Activated naive CD4-positive, alpha-beta T cell treated with anti-CD3 and anti-CD28 coated beads for 36 hours (primary cell): ENCODE measurements at regions of chr4 and their contacts with region 1.

Region 1: GRCh38 chr4:13654158-13654797 is 26.8 kb upstream of the BOD1L1 start:
- DNase-seq: peak; percentile 88
- H3K4me3 Mint-ChIP-seq: peak overlapping the region; percentile 76
- H3K27ac Mint-ChIP-seq: no peak overlapping the region
- H3K4me1 Mint-ChIP-seq: peaks cover 15% of the 10 kb centered on the region
- H3K27me3 Mint-ChIP-seq: peaks cover 1% of the 10 kb centered on the region

Region 2: GRCh38 chr4:13627606-13628301 is 26.5 kb before region 1 on chr4 and contains the start of gene BOD1L1:
- CTCF ChIA-PET with region 1: interaction called, 14 read pairs
- intact Hi-C with region 1: loop called (anchors 1 kb)
- DNase-seq: peak; percentile 84
- H3K4me3 Mint-ChIP-seq: peak within 1 kb of the TSS; percentile 95
- H3K27ac Mint-ChIP-seq: peak within 1 kb of the TSS; percentile 92
- H3K4me1 Mint-ChIP-seq: peaks cover 46% of the 10 kb centered on the region
- H3K27me3 Mint-ChIP-seq: no peaks in the 10 kb centered on the region
- total RNA-seq, gene BOD1L1: 24.2 to 24.3 TPM

Region 3: GRCh38 chr4:13892739-13893105 is 238.4 kb after region 1 on chr4:
- CTCF ChIA-PET with region 1: no interaction called
- intact Hi-C with region 1: loop called (anchors 2 kb)
- DNase-seq: no peak
- H3K4me3 Mint-ChIP-seq: no peak overlapping the region
- H3K27ac Mint-ChIP-seq: peak overlapping the region; percentile 55
- H3K4me1 Mint-ChIP-seq: peaks cover 17% of the 10 kb centered on the region
- H3K27me3 Mint-ChIP-seq: peaks cover 17% of the 10 kb centered on the region

Region 4: GRCh38 chr4:13920901-13921300 is 266.6 kb after region 1 on chr4:
- CTCF ChIA-PET with region 1: no interaction called
- intact Hi-C with region 1: no loop called
- DNase-seq: no peak
- H3K4me3 Mint-ChIP-seq: no peak overlapping the region
- H3K27ac Mint-ChIP-seq: no peak overlapping the region
- H3K4me1 Mint-ChIP-seq: no peaks in the 10 kb centered on the region
- H3K27me3 Mint-ChIP-seq: no peaks in the 10 kb centered on the region

Region 5: GRCh38 chr4:14178421-14178820 is 524.1 kb after region 1 on chr4:
- CTCF ChIA-PET with region 1: no interaction called
- intact Hi-C with region 1: loop called (anchors 2 kb)
- DNase-seq: peak; percentile 7
- H3K4me3 Mint-ChIP-seq: no peak overlapping the region
- H3K27ac Mint-ChIP-seq: peak overlapping the region; percentile 75
- H3K4me1 Mint-ChIP-seq: peaks cover 20% of the 10 kb centered on the region
- H3K27me3 Mint-ChIP-seq: no peaks in the 10 kb centered on the region

Region 6: DNA sequence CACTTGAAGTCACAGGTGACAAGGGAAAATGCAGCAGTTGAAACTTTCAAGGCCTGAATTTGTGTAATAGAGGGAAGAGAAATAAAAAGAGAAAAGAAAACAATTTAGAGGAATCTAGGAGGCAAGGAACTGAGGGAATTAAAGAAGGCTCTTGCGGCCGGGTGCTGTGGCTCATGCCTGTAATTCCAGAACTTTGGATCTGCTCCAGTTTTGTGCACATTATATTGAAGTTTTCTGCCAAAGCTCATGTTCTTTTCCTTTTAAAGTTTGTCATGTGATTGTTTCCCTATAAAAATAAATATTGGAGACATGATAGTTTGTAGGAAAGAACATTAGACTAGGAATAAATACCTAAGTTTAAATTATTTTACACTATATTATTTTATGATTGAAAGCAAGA is 914.1 kb after region 1 on chr4:
- CTCF ChIA-PET with region 1: no interaction called
- intact Hi-C with region 1: no loop called
- DNase-seq: no peak
- H3K4me3 Mint-ChIP-seq: no peak overlapping the region
- H3K27ac Mint-ChIP-seq: no peak overlapping the region
- H3K4me1 Mint-ChIP-seq: no peaks in the 10 kb centered on the region
- H3K27me3 Mint-ChIP-seq: no peaks in the 10 kb centered on the region

Region 7: DNA sequence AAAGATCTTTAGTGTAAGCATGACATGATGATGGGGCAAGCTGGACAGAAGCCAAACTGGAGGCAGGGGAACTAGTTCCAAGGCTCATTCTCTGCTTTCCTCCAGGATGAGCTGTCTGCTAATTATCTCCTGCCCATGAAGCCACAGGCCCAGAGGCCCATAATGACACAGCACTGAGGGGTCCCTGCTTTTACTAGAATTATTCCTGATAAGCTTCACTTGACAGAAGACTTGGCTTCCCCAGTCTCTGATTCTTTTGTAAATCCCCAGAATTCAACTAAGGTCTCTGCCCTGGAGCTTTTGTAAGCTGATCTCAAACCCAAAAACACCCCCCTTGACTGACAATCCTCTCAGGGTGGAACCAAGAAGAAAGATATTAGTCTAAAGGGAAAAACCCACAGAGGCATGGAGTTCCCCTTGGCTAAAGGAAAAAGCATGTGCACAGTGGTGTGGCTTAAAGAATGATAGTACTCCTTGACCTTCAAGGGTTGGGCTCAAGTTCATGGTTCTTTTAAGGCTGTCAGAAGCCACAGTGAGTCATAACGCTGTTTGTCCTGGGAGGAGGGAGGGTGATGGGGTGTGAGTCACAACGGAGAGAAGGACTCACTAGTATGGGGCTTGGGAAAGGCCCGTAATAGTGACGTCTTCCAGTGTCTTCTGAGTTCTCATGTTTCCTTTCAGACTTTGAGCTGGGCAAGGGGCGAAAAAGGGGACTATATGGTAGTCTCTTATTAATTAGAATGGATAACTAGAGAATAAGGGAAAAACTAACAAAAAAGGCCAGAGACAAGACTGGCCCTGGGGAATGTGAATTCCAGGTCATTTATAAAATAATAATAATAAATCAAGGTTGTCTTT is 1202.0 kb after region 1 on chr4:
- CTCF ChIA-PET with region 1: no interaction called
- intact Hi-C with region 1: loop called (anchors 10 kb)
- DNase-seq: peak; percentile 88
- H3K4me3 Mint-ChIP-seq: no peak overlapping the region
- H3K27ac Mint-ChIP-seq: peak overlapping the region; percentile 86
- H3K4me1 Mint-ChIP-seq: peaks cover 24% of the 10 kb centered on the region
- H3K27me3 Mint-ChIP-seq: peaks cover 19% of the 10 kb centered on the region

Region 8: GRCh38 chr4:15375667-15376066 is 1721.4 kb after region 1 on chr4:
- CTCF ChIA-PET with region 1: no interaction called
- intact Hi-C with region 1: loop called (anchors 10 kb)
- DNase-seq: no peak
- H3K4me3 Mint-ChIP-seq: no peak overlapping the region
- H3K27ac Mint-ChIP-seq: peak overlapping the region; percentile 12
- H3K4me1 Mint-ChIP-seq: peaks cover 26% of the 10 kb centered on the region
- H3K27me3 Mint-ChIP-seq: no peaks in the 10 kb centered on the region